AG04450 (cell line): ENCODE measurements at regions of chr13 and their contacts with region 1.

Region 1: GRCh38 chr13:95191821-95192563 is 109.3 kb downstream of the ABCC4 start:
- DNase-seq: peak; percentile 57
- H3K4me3 ChIP-seq: no peak overlapping the region
- H3K27ac ChIP-seq: no peak overlapping the region
- H3K27me3 ChIP-seq: no peaks in the 10 kb centered on the region
- CTCF ChIP-seq: peak; percentile 97

Region 2: DNA sequence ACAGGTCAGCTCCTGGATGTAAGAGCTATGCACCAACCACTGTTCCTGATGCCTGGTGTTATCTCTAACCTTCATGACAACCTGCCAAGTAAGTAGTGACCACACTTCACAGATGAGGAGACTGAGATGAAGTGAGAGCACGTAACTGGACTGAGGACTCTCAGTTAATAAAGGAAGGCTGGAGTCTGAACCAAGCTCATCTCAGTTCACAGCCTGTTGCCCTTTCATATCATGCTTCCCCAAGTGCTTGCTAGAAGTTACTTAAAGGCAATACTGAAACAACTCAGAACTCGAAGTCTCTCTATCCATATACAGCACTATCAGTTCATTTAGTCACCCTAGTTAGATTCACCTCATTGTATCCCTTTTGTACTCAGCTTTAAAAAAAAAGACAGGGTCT is 10.4 kb before region 1 on chr13:
- CTCF ChIA-PET with region 1: interaction called, 15 read pairs
- POLR2A ChIA-PET with region 1: no interaction called
- DNase-seq: no peak
- H3K4me3 ChIP-seq: no peak overlapping the region
- H3K27ac ChIP-seq: no peak overlapping the region
- H3K27me3 ChIP-seq: no peaks in the 10 kb centered on the region
- CTCF ChIP-seq: no peak

Region 3: DNA sequence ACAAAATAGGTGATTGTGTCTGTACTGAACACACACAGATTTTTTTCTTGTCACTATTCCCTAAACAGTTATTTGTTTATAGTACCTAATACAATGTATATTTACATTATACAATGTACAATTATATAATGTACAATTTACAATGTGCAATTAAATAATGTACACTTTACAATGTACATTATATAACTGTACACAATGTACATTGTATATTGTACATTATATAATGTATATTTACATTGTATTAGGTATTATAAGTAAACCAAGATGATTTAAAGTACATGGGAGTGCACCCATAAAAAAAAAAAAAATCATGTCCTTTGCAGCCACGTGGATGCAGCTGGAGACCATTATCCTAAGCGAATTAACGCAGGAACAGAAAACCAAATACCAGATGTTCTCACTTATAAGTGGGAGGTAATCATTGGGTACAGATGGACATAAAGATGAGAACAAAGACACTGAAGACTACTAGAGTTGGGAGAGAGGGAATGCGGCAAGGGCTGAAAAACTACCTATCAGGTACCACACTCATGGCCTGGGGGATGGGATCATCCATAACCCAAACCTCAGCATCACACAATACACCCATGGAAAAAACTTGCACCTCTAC is 41.1 kb after region 1 on chr13:
- CTCF ChIA-PET with region 1: interaction called, 12 read pairs
- POLR2A ChIA-PET with region 1: no interaction called
- DNase-seq: no peak
- H3K4me3 ChIP-seq: no peak overlapping the region
- H3K27ac ChIP-seq: no peak overlapping the region
- H3K27me3 ChIP-seq: no peaks in the 10 kb centered on the region
- CTCF ChIP-seq: no peak

Region 4: DNA sequence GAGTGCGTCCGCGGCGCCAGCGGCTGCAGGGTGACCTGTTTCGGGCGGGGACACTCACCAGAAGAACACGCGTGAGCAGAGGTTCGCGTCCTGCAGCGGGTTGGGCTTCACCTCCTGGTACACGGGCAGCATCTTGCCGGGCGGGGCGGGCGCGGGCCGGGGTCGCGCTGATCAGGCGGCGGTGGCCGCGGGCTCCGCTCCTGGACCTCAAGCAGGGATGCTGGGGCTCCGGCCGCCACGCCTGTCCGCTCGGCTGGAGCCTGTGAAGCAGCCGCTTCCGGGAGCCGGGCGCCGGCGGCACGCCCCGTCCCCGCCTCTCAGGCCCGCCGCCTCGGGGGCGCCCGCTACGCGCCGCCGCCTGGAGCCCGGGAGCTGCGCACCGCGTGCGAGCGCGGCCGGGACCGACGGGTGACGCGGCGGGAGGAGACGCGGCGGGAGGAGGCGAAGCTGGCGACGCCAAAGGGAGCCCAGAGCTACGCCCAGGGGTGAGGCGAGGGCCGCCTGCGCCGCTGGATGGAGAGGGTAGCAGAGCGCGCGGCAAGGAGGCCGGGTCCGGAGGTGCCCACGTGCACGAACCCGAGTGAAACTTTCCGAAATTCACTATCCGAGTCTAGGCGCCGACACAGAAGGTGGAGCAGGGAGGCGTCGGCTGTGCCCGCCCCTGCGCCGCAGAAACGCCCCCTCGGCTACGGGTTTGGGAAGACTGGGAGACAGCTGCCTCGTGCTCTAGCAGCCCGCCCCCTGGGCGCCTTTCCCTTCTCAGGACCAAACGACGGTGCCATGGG is 109.4 kb after region 1 on chr13 and contains the start of gene ABCC4:
- CTCF ChIA-PET with region 1: interaction called, 110 read pairs
- POLR2A ChIA-PET with region 1: interaction called, 6 read pairs
- DNase-seq: peak; percentile 27
- H3K4me3 ChIP-seq: peak within 1 kb of the TSS; percentile 85
- H3K27ac ChIP-seq: peak within 1 kb of the TSS; percentile 73
- H3K27me3 ChIP-seq: no peaks in the 10 kb centered on the region
- CTCF ChIP-seq: no peak
- polyA plus RNA-seq, gene ABCC4: 110 and 140 TPM in 2 replicates

Region 5: GRCh38 chr13:95378603-95379002 is 186.6 kb after region 1 on chr13:
- CTCF ChIA-PET with region 1: interaction called, 262 read pairs
- POLR2A ChIA-PET with region 1: interaction called, 8 read pairs
- DNase-seq: no peak
- H3K4me3 ChIP-seq: no peak overlapping the region
- H3K27ac ChIP-seq: no peak overlapping the region
- H3K27me3 ChIP-seq: no peaks in the 10 kb centered on the region
- CTCF ChIP-seq: no peak

Region 6: GRCh38 chr13:95480131-95480545 is 288.1 kb after region 1 on chr13:
- CTCF ChIA-PET with region 1: interaction called, 11 read pairs
- POLR2A ChIA-PET with region 1: no interaction called
- DNase-seq: no peak
- H3K4me3 ChIP-seq: no peak overlapping the region
- H3K27ac ChIP-seq: no peak overlapping the region
- H3K27me3 ChIP-seq: peaks cover 5% of the 10 kb centered on the region
- CTCF ChIP-seq: no peak

Region 7: DNA sequence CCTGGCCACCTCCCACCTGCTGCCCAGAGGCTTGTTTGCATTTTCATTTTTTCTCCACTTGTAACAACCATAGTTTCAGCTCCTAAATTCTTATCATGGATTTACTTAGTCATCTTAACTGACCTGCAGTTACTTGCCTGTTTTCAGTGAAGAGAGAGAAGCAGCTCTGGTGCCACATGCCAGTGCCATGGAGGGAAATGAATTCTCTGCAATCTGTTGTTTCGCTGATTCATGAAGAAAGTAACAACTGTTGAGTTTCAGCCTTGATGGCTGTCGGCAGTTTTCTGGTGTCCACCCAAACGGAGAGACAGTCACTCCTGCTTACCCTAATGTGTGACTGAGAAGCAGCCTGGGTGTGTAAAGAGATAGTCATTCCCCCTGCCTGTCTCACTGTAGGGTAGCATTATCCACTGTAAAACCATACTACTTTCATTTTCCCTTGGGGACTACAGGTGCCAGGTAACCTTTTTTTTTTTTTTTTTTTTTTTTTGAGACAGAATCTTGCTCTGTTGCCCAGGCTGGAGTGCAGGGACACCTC is 601.1 kb after region 1 on chr13:
- CTCF ChIA-PET with region 1: no interaction called
- POLR2A ChIA-PET with region 1: no interaction called
- DNase-seq: no peak
- H3K4me3 ChIP-seq: no peak overlapping the region
- H3K27ac ChIP-seq: no peak overlapping the region
- H3K27me3 ChIP-seq: no peaks in the 10 kb centered on the region
- CTCF ChIP-seq: no peak